HEK293 (cell line): ENCODE measurements at regions of chr1 and their contacts with region 1.

Region 1: DNA sequence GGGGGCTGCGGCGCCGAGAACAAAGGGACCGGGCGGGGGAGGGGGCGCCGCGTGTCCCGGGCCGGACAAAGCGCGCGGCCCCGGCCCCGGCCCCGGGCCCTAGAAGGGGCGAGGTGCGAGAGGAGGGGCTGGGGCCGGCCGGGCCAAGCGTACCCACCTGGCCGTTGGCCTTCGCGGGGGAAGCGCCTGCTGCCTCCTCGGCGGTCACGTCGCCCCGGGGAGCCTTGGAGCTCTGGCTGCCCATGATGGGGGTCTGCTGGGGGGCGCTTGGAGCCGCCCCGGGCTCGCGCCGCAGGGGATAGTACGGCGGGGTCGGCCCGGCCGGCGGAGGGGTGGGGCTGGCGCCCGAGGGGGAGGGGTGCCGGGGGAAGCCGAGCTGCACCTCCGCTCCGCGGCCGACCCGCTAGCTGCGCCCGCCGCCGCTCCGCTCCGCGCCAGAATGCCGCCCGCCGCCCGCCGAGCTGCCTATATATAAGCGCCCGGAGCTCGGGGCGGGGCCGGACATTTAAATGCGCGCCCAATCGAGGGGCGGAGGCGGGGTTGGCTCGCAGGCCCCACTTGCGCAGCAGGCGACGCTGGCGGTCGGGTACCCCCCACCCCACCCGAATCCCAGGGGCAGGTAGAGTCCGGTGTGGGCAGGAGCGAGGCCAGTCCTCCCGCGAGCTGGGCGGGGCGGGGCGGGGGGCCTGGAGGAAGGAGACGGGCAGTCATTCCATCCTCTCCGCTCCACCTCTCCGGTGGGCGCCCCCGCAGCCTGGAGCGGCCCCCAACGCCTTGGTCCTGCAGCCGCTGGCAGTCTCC is at the start of gene MARCKSL1:
- H3K4me3 ChIP-seq: peak within 1 kb of the TSS; percentile 84
- H3K27ac ChIP-seq: peak within 1 kb of the TSS; percentile 76; the same call in 1 of the 2 replicates
- H3K4me1 ChIP-seq: no peaks in the 10 kb centered on the region
- CTCF ChIP-seq: no peak

Region 2: DNA sequence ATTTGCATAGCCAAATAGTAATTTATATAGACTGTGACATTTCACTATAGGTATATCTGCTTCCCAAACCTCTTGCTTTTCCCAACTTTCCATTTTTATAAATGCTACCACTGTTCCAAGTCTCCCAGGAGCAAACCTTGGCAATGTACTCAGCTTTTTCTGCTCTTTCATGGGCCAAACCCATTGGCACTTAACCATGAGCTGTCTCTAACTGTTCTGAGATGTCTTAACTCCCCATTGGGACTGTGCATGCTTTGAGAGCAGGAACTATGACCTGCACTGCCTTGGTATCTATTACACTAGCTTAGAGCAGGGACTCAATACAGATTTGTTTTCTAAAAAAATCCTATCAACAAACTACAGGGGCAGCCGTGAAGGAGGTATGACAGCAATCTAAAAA is 344.8 kb before region 1 on chr1:
- CTCF ChIA-PET with region 1: no interaction called
- POLR2A ChIA-PET with region 1: no interaction called
- H3K4me3 ChIP-seq: no peak overlapping the region
- H3K27ac ChIP-seq: no peak overlapping the region
- H3K4me1 ChIP-seq: no peaks in the 10 kb centered on the region
- CTCF ChIP-seq: no peak

Region 3: DNA sequence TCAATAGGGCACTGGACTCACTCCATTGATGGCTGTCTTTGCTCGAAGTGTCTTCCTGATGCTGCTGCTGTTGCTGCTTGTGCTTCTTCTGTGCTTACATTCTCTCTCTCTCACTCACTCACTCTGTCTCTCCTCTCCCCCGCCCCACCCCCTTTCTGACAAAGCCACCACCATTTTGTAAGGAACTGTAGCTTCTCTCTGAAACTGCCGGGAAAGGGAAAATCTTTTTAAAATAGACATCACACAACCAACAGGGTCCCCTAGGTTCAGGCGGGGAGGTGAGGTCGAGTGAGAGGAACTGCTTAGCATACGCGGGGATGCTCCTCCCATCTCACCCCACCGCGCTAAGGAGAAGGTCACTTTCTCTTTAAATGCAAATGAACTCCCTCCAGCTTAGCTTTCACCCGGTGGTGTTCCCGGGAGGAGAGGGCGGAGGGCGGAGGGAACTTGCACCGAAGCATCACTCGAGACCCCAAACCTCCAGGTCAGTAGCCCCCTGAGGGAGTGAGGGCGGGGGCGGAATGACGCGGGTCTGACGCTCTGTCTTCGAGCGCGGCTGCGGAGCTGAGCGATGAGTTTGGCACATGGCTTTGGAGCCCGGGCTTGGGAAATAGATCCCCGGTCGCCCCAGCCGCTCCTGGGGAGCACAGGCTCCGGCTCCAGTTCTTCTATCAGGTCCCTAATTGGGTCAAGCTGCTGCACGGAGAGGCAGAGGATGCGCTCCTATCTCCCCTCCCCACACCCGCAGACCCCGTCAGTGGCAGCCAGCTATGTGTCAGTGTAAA is 135.6 kb before region 1 on chr1 and contains the start of gene CCDC28B:
- CTCF ChIA-PET with region 1: no interaction called
- POLR2A ChIA-PET with region 1: interaction called, 16 read pairs
- H3K4me3 ChIP-seq: peak within 1 kb of the TSS; percentile 49
- H3K27ac ChIP-seq: no peak within 1 kb of the TSS; the same call in 1 of the 2 replicates
- H3K4me1 ChIP-seq: no peaks in the 10 kb centered on the region; the same call in 1 of the 2 replicates
- CTCF ChIP-seq: no peak

Region 4: DNA sequence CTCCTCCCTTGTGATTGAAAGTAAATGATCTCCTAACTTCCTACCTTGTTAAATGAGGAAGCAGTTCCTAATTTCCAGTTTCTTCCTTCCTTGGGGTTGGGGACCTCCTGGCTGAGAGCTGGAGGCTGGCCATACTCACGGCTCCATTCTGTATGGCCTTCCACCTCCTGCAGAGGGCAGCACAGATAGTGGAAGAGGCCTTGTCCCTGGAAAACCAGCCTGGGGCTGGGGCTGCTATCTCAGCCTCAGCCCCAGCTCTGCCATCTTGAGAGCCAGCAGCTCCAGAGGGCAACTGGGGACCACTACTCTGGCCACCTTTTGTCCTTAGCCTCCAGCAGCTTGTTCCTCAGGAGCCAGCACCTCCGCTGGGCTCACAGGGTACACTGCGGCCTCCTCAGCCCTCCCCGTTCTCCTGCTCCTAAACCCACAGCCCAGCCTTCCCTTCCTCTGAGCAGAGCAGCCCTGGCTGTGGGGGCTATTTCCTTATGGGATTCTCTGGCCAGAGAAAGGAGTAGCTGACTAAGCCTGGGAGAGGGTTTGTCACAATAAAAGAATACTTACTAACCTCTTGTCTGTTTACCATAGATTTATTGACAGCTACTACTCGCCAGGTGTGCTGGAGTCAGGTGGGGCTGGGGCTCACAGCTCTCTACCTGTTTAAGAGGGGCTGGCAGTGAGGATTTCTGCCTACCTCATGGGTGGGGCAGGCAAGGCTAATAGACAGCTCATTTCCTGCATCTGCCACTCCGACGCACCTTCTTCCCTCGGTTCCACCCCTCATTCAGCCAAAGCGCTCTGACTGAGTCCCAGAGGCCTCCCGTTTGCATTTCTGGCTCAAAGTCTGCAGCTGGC is 120.1 kb before region 1 on chr1:
- CTCF ChIA-PET with region 1: interaction called, 6 read pairs
- POLR2A ChIA-PET with region 1: interaction called, 22 read pairs
- H3K4me3 ChIP-seq: no peak overlapping the region
- H3K27ac ChIP-seq: no peak overlapping the region
- H3K4me1 ChIP-seq: 0 out of 2 replicates have a peak, but pooled peaks cover 2% of the 10 kb centered on the region
- CTCF ChIP-seq: peak; percentile 72

Region 5: GRCh38 chr1:32321712-32322291 is 14.2 kb before region 1 on chr1:
- CTCF ChIA-PET with region 1: interaction called, 4 read pairs
- POLR2A ChIA-PET with region 1: interaction called, 22 read pairs
- H3K4me3 ChIP-seq: no peak overlapping the region
- H3K27ac ChIP-seq: no peak overlapping the region
- H3K4me1 ChIP-seq: no peaks in the 10 kb centered on the region
- CTCF ChIP-seq: no peak

Region 6: DNA sequence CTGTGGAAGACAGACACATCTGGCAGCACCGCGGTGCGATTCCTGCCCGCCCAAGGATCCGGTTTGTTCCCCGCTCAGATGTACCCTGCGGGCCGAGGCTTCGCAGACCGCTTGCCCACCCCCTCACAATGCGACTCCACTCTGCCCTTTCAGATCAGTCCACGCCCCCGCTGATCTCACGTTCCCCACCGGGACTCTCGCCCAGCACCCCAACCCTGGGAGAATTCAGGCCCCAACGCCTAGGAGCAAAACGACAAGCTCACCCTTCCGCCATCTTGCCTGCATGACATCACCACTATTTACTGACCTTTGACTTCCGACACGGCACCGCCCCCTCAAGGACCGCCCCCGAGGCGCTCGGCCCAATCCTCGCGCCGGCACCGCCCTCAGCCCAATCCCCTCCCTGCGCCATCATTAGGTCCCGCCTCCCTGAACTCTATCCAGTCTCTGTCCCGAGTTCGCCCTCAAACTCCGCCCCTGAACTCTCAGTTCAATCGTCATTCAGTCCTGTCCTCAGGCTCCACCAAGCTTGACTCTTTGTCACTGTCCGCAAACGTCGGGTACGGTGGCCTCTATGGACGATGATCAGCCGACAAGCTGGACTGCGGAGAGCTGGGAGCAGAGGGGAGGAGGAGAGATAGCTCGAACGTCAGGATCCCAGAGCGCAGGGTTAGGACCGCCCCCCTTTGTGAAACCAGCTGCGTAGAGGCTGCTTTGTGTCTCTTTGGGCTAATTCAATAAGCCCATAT is 58.3 kb after region 1 on chr1 and contains the start of gene BSDC1:
- CTCF ChIA-PET with region 1: interaction called, 3 read pairs
- POLR2A ChIA-PET with region 1: interaction called, 36 read pairs
- H3K4me3 ChIP-seq: peak within 1 kb of the TSS; percentile 92
- H3K27ac ChIP-seq: peak within 1 kb of the TSS; percentile 64
- H3K4me1 ChIP-seq: peaks cover 6% of the 10 kb centered on the region; the same call in 1 of the 2 replicates
- CTCF ChIP-seq: no peak

Region 7: GRCh38 chr1:32421775-32422174 is 85.8 kb after region 1 on chr1:
- CTCF ChIA-PET with region 1: no interaction called
- POLR2A ChIA-PET with region 1: no interaction called
- H3K4me3 ChIP-seq: no peak overlapping the region
- H3K27ac ChIP-seq: no peak overlapping the region
- H3K4me1 ChIP-seq: no peaks in the 10 kb centered on the region
- CTCF ChIP-seq: no peak

Region 8: GRCh38 chr1:32644426-32644825 is 308.4 kb after region 1 on chr1:
- CTCF ChIA-PET with region 1: no interaction called
- POLR2A ChIA-PET with region 1: no interaction called
- H3K4me3 ChIP-seq: no peak overlapping the region
- H3K27ac ChIP-seq: no peak overlapping the region
- H3K4me1 ChIP-seq: no peaks in the 10 kb centered on the region
- CTCF ChIP-seq: no peak